ENCODE measurements at regions of chr2 and their contacts with region 1.

Region 1: GRCh38 chr2:112996635-112997034 is 8.6 kb upstream of the IL36A start:
- DNase-seq: peak; percentile 81
- H3K4me3 Mint-ChIP-seq: peak overlapping the region; percentile 48
- H3K27ac Mint-ChIP-seq: peak overlapping the region; percentile 82
- H3K4me1 Mint-ChIP-seq: peaks cover 34% of the 10 kb centered on the region
- H3K27me3 Mint-ChIP-seq: no peaks in the 10 kb centered on the region

Region 2: DNA sequence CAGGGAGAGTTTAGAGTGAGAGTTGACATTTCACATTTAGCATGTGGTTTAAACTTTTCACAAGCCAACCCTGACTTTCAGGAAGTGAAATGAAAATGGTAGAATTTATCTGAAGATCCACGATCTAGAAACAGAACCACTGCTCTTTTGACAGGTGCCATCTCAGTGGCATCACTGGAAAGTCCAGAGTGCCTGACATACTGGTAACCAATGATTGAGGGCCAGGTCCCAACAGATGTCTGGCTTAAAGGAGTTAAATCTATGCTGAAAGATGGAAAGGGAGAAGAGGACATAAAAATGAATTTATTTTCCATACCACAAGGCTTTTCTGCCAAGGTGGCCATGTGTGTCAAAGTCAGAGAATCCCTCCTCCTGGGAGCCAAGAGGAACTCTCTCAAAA is 16.1 kb before region 1 on chr2:
- intact Hi-C with region 1: loop called (anchors 2 kb)
- DNase-seq: no peak
- H3K4me3 Mint-ChIP-seq: no peak overlapping the region
- H3K27ac Mint-ChIP-seq: no peak overlapping the region
- H3K4me1 Mint-ChIP-seq: peaks cover 27% of the 10 kb centered on the region
- H3K27me3 Mint-ChIP-seq: peaks cover 6% of the 10 kb centered on the region

Region 3: GRCh38 chr2:113015646-113016045 is 19.0 kb after region 1 on chr2:
- intact Hi-C with region 1: loop called (anchors 1 kb)
- DNase-seq: no peak
- H3K4me3 Mint-ChIP-seq: no peak overlapping the region
- H3K27ac Mint-ChIP-seq: no peak overlapping the region
- H3K4me1 Mint-ChIP-seq: peaks cover 6% of the 10 kb centered on the region
- H3K27me3 Mint-ChIP-seq: peaks cover 19% of the 10 kb centered on the region

Region 4: GRCh38 chr2:113225263-113226259 is 228.9 kb after region 1 on chr2:
- intact Hi-C with region 1: no loop called
- DNase-seq: no peak
- H3K4me3 Mint-ChIP-seq: no peak overlapping the region
- H3K27ac Mint-ChIP-seq: no peak overlapping the region
- H3K4me1 Mint-ChIP-seq: peaks cover 23% of the 10 kb centered on the region
- H3K27me3 Mint-ChIP-seq: no peaks in the 10 kb centered on the region

Measured in activated T-helper 1 cell treated with anti-CD3 and anti-CD28 coated beads, Interleukin-12 subunit alpha, Interleukin-12 subunit beta, Interleukin-2, Interleukin-4 antibody, amounts not matched to agents 30 ng/mL and 10 ng/mL and 1 ng/mL, durations not matched to agents 14 hours and 24 hours and 36 hours (primary cell).